ENCODE measurements at regions of chr2 and their contacts with region 1.

Region 1: GRCh38 chr2:105261061-105261460 is 19.5 kb downstream of the GPR45 start:
- DNase-seq: peak; percentile 93
- H3K4me3 ChIP-seq: no peak overlapping the region
- H3K27me3 ChIP-seq: no peaks in the 10 kb centered on the region
- CTCF ChIP-seq: no peak

Region 2: GRCh38 chr2:105235388-105236054 is 25.5 kb before region 1 on chr2:
- CTCF ChIA-PET with region 1: interaction called, 18 read pairs
- POLR2A ChIA-PET with region 1: no interaction called
- DNase-seq: peak; percentile 10
- H3K4me3 ChIP-seq: no peak overlapping the region
- H3K27me3 ChIP-seq: no peaks in the 10 kb centered on the region; the same call in 1 of the 2 replicates
- CTCF ChIP-seq: peak; percentile 78

Measured in BJ (cell line).